GM13977 (cell line): ENCODE measurements at regions of chr5 and their contacts with region 1.

Region 1: GRCh38 chr5:168679515-168679920 is 100.3 kb upstream of the PANK3 start:
- DNase-seq: peak; percentile 79
- CTCF ChIP-seq: peak; percentile 83

Region 2: DNA sequence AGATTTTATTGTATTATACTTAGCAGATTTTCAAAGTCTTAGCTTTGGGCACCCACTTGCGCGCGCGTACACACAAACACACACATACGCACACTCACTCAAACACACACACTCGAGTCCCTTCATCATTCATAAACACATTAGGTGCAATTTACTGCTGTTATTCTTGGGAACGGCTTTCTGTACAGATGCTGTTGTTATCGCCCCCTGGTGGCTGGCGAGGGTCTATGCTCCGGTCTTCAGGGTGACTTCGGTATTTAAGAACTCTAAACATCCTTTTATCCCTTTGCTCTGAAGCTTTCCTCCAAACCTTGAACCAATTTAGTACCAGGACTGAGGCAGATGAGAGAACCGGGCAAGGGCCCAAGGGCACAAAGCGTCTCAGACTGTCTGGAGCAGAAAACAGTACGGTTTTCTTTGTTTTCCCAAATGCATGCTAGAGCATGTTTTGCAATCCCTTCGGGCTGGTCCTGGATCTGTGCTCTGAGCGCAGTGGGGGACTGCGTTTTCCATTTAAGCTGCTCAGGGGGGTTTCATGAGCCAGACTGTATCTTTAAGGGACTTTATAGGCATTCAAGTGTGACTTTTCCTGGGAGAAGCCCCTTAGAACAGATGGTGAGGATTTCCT is 623.1 kb after region 1 on chr5:
- in situ Hi-C with region 1: loop called (anchors 25 kb)
- DNase-seq: peak; percentile 75
- CTCF ChIP-seq: peak; percentile 88